Mammary epithelial cell (primary cell): ENCODE measurements at regions of chr3 and their contacts with region 1.

Region 1: DNA sequence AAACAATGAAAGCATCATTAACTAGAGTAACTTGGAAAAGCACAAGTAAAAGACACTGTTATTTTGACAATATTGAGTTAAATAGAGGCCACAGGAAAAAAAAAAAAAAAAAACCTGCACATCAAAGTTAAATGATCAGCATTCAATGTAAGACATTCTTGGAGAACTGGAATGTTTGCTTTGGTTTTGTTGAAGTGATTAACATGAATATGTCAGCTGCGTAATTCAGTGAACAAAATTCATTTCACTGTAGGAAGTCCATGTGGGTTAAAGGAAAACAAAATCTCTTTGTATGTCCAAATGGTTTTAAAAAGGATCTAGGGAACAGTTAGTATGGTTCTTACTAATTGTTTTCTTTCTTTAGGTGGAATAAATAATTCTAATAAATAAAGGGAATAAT is 252.8 kb upstream of the CNTN6 start:
- DNase-seq: no peak
- H3K4me3 ChIP-seq: no peak overlapping the region
- H3K27ac ChIP-seq: no peak overlapping the region
- H3K4me1 ChIP-seq: no peaks in the 10 kb centered on the region
- H3K27me3 ChIP-seq: no peaks in the 10 kb centered on the region
- CTCF ChIP-seq: no peak

Region 2: DNA sequence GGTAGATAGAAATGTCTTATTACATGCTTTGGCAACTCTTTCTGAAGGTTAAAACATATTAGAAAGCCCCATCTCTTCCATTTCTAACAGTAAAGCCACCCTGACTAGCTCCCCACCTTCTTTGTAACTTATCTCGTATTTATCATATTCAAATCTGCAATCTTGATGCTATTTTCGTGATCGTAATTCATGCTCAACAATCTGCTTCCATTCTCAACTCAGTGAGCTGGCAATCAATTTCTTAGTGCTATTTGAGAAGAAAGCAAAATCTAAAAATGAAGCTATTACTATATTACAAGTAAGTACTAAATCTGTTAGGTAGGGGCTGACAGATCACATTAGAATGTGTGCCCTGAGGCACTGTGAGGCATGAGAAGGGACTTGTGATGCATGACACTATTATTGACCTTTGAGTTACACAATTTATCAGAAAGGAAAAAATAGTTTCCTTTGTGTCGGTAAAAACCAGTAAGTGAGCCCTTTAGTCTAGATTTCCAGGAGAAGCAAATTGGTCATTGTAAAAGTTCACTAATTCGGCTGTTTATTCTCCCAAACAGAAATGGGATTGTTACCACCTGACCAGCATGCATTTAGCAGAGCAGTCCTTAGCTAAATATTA is 126.9 kb before region 1 on chr3:
- CTCF ChIA-PET with region 1: no interaction called
- dilution Hi-C with region 1: no loop called
- in situ Hi-C with region 1: no loop called
- intact Hi-C with region 1: loop called (anchors 10 kb)
- DNase-seq: peak; percentile 77
- H3K4me3 ChIP-seq: no peak overlapping the region
- H3K27ac ChIP-seq: no peak overlapping the region
- H3K4me1 ChIP-seq: peaks cover 10% of the 10 kb centered on the region
- H3K27me3 ChIP-seq: no peaks in the 10 kb centered on the region
- CTCF ChIP-seq: no peak

Region 3: GRCh38 chr3:775178-775885 is 64.6 kb before region 1 on chr3:
- CTCF ChIA-PET with region 1: no interaction called
- dilution Hi-C with region 1: no loop called
- in situ Hi-C with region 1: no loop called
- intact Hi-C with region 1: loop called (anchors 10 kb)
- DNase-seq: peak; percentile 21
- H3K4me3 ChIP-seq: no peak overlapping the region
- H3K27ac ChIP-seq: no peak overlapping the region
- H3K4me1 ChIP-seq: no peaks in the 10 kb centered on the region
- H3K27me3 ChIP-seq: no peaks in the 10 kb centered on the region
- CTCF ChIP-seq: no peak

Region 4: DNA sequence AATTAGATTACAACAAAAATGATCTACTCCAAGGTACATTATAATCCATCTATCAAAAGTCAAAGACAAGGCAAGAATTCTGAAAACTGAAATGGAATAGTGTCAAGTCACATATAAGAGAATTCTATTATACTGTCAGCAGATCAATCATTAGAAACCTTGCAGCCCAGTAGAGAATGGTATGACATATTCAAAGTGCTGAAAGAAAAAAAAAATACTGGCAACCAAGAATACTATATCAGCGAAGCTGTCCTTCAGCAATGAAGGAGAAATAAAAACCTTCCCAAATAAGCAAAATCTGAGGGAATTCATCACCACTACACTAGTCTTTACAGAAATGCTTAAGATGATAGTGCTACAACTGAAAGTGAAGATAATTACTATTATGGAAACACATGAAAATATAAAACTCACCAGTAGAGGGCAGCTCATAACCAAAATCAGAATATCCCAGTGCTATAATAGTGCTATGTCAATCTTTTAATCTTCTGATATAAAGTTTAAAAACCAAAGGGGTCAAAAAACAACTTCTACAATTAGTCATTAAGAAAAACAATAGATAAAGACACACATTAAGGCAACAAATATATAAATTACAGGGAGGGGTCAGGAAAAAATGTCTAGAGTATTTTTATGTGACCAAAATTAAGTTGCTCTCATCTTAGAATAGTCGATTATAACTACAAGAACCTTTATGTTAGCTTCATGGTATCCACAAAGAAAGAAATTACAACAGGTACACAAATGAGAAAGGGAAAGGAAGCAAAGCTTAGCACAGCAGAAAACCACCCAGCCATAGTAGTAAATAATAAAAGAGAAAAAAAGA is 62.2 kb after region 1 on chr3:
- CTCF ChIA-PET with region 1: no interaction called
- dilution Hi-C with region 1: no loop called
- in situ Hi-C with region 1: no loop called
- intact Hi-C with region 1: no loop called
- DNase-seq: peak; percentile 5
- H3K4me3 ChIP-seq: no peak overlapping the region
- H3K27ac ChIP-seq: no peak overlapping the region
- H3K4me1 ChIP-seq: no peaks in the 10 kb centered on the region
- H3K27me3 ChIP-seq: no peaks in the 10 kb centered on the region
- CTCF ChIP-seq: peak; percentile 49 to 57